ENCODE measurements at regions of chr3 and their contacts with region 1.

Region 1: GRCh38 chr3:78659386-78659987 is 1108.3 kb downstream of the ROBO1 start:
- DNase-seq: peak in 1 of 2 donors; percentile 52
- H3K4me3 ChIP-seq: no peak overlapping the region
- CTCF ChIP-seq: no peak
- POLR2A ChIP-seq: no peak

Region 2: DNA sequence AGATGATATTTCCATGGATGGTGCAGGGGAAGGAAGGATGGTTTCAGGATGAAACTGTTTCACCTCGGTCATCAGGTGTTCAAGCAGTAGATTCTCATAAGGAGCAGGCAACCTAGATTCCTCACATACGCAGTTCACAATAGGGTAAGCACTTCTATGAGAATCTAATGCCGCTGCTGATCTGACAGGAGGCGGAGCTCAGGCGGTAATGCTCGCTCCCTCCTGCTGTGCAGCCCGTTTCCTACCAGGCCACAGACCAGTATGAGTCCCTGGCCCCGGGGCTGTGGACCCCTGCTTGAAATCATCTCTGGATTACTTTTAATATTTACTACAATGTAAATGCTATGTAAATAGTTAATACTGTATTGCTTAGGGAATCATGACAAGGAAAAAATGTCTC is 1377.8 kb before region 1 on chr3:
- intact Hi-C with region 1: loop called (anchors 10 kb)
- DNase-seq: no peak
- H3K4me3 ChIP-seq: no peak overlapping the region
- CTCF ChIP-seq: no peak
- POLR2A ChIP-seq: no peak

Region 3: DNA sequence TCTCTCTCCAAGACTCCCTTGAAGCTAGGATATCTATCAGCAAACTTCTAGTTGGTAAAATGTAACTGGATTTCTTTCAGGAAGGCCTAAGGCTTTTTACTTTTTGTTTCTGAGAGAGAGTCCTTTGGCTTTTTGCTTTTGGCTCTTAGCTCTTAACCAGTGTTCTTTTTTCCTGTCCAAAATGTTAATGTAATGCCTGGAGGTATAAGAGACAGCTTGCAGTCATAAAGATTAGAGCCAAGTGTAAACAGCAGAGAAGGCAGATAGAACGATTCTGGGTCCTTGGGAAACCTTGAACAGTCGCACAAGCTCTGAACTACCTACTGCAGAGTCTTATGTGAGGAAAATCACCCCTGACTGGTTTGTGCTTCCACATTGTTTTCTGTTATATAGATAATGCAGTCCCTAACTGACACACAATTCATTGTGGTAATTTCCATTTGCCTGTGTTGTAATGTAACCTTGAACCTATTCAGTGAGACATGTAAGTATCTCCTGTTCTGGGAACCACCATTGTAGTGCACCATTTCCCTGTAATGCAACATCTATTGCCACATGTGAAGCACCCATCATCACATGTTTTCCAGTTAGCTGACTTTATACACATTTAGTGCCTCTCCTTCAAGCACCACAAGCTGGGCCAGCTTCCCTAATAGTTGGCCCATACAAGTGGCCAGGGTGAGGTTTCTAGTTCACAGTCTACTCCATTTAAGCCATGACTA is 203.6 kb before region 1 on chr3:
- intact Hi-C with region 1: no loop called
- DNase-seq: no peak
- H3K4me3 ChIP-seq: no peak overlapping the region
- CTCF ChIP-seq: no peak
- POLR2A ChIP-seq: no peak

Region 4: DNA sequence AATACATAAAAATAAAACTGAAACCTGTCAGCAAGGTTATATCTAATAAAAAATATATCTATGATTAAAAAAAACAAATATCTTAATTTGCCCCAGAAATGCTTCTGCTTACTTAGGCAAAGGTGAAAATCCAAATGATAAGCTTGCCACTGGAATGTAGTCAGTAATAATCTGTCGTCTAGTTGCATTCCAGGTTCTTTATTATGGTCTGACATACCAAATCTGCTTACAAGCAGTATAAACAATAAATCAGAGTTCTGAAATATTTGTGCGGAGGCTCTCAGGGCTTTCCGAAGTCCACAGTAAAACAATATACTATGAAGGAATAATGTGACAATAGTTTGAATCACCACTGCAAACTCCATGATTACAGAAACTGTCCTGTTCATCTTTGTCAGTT is 25.2 kb before region 1 on chr3:
- intact Hi-C with region 1: no loop called
- DNase-seq: no peak
- H3K4me3 ChIP-seq: no peak overlapping the region
- CTCF ChIP-seq: no peak
- POLR2A ChIP-seq: no peak

Region 5: GRCh38 chr3:79032686-79033318 is 373.3 kb after region 1 on chr3:
- intact Hi-C with region 1: loop called (anchors 5 kb)
- DNase-seq: no peak
- H3K4me3 ChIP-seq: no peak overlapping the region
- CTCF ChIP-seq: no peak
- POLR2A ChIP-seq: no peak

Region 6: DNA sequence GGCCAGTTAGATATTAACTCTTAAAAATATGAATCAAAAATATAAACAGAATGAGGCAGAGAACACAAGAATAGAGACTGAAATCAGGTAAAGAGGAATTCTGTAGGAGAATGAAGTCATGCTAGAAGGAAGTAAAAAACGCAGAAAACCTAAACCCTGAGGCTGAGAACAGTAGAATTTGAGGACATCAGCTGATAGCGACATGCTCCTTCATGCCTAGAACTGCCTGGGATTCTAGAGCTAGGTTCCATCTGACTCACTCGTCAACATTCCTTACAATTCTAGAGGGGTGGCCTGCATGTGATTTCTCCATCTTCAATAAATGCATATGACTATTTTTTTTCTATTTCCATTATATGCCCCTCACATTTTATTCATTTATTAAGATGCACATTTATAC is 765.3 kb after region 1 on chr3:
- intact Hi-C with region 1: no loop called
- DNase-seq: no peak
- H3K4me3 ChIP-seq: no peak overlapping the region
- CTCF ChIP-seq: no peak
- POLR2A ChIP-seq: no peak